ENCODE measurements at regions of chr2 and their contacts with region 1.

Region 1: GRCh38 chr2:43219383-43220228 is 6.8 kb downstream of the ZFP36L2 start:
- DNase-seq: peak; percentile 93
- ATAC-seq: peak; percentile 52
- H3K4me3 Mint-ChIP-seq: peak overlapping the region; percentile 93
- H3K27ac Mint-ChIP-seq: peak overlapping the region; percentile 97
- H3K4me1 Mint-ChIP-seq: peaks cover 49% of the 10 kb centered on the region
- H3K27me3 Mint-ChIP-seq: no peaks in the 10 kb centered on the region

Region 2: DNA sequence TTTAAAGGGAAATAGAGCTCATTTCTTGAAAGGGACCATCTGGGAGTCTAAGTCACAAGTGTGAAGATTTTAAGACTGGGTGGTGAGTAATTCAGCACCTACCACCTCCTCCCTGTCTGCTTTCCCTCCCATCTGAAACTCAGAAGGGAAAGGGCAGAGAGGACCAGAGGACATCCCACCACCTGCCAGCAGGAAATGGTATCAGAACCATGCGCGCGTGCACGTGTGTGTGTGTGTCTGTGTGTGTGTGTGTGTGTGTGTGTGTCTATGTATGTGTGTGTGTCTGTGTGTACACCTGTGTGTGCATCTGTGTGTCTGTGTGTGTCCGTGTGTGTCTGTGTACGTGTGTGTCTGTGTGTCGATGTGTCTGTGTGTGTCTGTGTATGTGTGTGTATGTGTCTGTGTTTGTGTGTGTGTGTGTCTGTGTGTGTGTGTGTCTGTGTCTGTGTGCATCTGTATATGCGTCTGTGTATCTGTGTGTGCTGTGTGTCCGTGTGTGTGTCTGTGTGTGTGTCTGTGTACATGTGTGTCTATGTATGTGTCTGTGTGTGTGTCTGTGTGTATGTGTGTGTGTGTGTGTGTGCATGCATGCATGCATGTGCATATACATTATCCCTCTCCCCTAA is 70.0 kb before region 1 on chr2:
- CTCF ChIA-PET with region 1: interaction called, 7 read pairs
- POLR2A ChIA-PET with region 1: interaction called, 23 read pairs
- DNase-seq: peak; percentile 65
- ATAC-seq: peak; percentile 67
- H3K4me3 Mint-ChIP-seq: peak overlapping the region; percentile 6
- H3K27ac Mint-ChIP-seq: peak overlapping the region; percentile 85
- H3K4me1 Mint-ChIP-seq: peaks cover 69% of the 10 kb centered on the region
- H3K27me3 Mint-ChIP-seq: no peaks in the 10 kb centered on the region

Region 3: GRCh38 chr2:43178602-43179542 is 40.7 kb before region 1 on chr2:
- CTCF ChIA-PET with region 1: interaction called, 18 read pairs
- POLR2A ChIA-PET with region 1: interaction called, 248 read pairs
- DNase-seq: no peak
- ATAC-seq: no peak
- H3K4me3 Mint-ChIP-seq: no peak overlapping the region
- H3K27ac Mint-ChIP-seq: peak overlapping the region; percentile 67
- H3K4me1 Mint-ChIP-seq: peaks cover 54% of the 10 kb centered on the region
- H3K27me3 Mint-ChIP-seq: no peaks in the 10 kb centered on the region

Region 4: DNA sequence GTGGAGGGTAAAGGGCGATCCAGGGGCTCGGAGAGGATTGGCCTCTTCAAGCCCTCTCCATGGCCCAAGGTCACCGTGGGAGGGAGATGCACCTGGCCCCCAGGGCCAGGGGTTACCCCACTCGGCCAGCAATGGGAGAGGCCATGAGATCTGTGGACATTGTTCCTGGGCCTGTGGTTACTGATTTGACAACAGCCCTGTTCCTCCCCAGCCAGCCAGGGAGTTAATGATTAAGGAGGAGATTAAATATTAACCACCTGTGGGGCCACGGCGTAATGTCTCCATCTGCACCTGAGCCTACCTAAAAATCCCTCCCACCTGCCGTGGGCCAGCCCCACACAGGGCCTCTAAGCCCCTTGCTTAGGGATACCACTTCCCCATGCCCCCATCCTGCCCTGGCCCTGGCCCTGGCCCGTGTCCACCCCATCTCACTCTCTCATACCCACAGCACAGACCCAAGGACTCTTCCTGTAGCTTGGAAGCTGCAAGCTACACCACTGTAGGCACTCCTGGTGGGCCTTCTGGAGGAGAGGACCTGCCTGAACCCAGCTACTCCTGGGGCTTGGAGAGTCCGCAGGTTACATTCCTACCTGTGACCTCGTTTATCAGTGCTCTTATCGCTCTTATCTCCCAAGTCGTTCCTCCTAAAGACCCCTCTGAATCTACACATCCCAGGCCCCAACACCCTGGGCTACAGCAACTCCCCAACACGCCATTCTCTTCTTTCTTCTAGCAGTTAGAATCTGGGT is 25.3 kb before region 1 on chr2:
- CTCF ChIA-PET with region 1: interaction called, 20 read pairs
- POLR2A ChIA-PET with region 1: interaction called, 71 read pairs
- DNase-seq: no peak
- ATAC-seq: peak; percentile 14
- H3K4me3 Mint-ChIP-seq: peak overlapping the region; percentile 77
- H3K27ac Mint-ChIP-seq: peak overlapping the region; percentile 94
- H3K4me1 Mint-ChIP-seq: peaks cover 65% of the 10 kb centered on the region
- H3K27me3 Mint-ChIP-seq: no peaks in the 10 kb centered on the region

Region 5: GRCh38 chr2:43201497-43201896 is 18.1 kb before region 1 on chr2:
- CTCF ChIA-PET with region 1: interaction called, 8 read pairs
- POLR2A ChIA-PET with region 1: interaction called, 71 read pairs
- DNase-seq: no peak
- ATAC-seq: no peak
- H3K4me3 Mint-ChIP-seq: no peak overlapping the region
- H3K27ac Mint-ChIP-seq: peak overlapping the region; percentile 77
- H3K4me1 Mint-ChIP-seq: peaks cover 38% of the 10 kb centered on the region
- H3K27me3 Mint-ChIP-seq: no peaks in the 10 kb centered on the region

Region 6: GRCh38 chr2:43239981-43240761 is 20.6 kb after region 1 on chr2:
- CTCF ChIA-PET with region 1: no interaction called
- POLR2A ChIA-PET with region 1: no interaction called
- DNase-seq: no peak
- ATAC-seq: no peak
- H3K4me3 Mint-ChIP-seq: no peak overlapping the region
- H3K27ac Mint-ChIP-seq: no peak overlapping the region
- H3K4me1 Mint-ChIP-seq: peaks cover 5% of the 10 kb centered on the region
- H3K27me3 Mint-ChIP-seq: no peaks in the 10 kb centered on the region

Measured in activated CD8-positive, alpha-beta T cell treated with anti-CD3 and anti-CD28 coated beads, Interleukin-2, amount 10 ng/mL, durations not matched to agents 7 days and 5 days (primary cell).